IMR-90 (cell line): ENCODE measurements at regions of chr20 and their contacts with region 1.

Region 1: DNA sequence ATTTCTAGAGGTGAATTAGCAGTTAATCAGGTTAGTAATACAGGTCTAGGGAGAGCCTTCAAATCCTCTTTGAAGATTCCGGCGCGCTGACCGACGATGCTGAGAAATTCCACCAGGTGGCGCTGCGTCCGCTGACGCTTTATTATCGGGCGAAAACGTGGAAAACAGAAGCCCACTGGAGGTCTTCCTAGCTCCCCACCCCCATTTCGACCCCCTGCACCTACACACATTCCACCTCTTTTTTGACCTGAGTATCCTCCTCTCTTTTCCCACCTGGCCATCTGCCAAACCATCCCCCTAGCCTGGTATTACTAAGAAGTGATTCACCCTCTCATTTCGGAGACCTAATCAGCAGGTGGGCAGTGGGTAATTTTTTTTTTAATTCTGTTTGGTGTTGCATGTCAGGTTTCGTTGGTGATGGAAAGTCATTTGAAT is 65.4 kb upstream of the RIN2 start:
- DNase-seq: peak; percentile 22
- ATAC-seq: peak; percentile 41; the same call in 1 of the 2 replicates
- H3K4me3 ChIP-seq: no peak overlapping the region
- H3K27ac ChIP-seq: no peak overlapping the region
- H3K4me1 ChIP-seq: peaks cover 4% of the 10 kb centered on the region; the same call in 1 of the 2 replicates
- H3K27me3 ChIP-seq: no peaks in the 10 kb centered on the region
- CTCF ChIP-seq: peak; percentile 81
- POLR2A ChIP-seq: no peak
- RAD21 ChIP-seq: peak; percentile 73

Region 2: DNA sequence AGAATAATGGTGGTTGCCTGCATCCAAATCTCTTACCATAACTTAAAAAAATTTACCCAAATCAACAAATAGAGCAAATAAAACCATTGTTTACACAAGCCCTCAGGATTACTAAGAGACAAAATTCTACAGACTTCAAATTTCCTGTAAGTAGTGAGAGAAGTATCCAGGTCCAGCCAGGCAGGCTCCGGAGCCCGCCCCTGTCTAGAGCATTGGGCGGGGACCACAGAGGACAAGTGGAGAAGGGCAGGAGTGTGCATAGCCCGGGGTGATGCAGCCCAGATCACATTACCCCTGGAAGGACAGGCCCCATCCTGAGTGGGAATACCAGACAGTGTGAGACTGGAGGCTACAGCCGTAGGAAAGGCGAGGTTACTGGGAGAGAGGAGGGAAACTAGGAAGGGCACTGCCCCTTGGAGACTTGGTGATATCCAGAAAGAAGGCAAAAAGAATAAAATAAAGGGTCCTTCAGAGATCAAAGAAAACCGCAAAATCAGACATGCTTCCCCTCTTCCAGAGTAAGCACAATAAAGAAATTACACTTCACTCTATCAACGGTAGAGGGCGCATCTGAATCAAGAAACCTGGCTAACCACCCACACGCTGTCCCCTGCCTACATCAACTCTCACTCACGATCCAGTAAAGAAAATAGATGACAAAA is 91.9 kb after region 1 on chr20:
- CTCF ChIA-PET with region 1: no interaction called
- POLR2A ChIA-PET with region 1: no interaction called
- dilution Hi-C with region 1: no loop called
- in situ Hi-C with region 1: no loop called
- intact Hi-C with region 1: loop called (anchors 1 kb)
- DNase-seq: peak; percentile 91
- ATAC-seq: peak; percentile 74
- H3K4me3 ChIP-seq: no peak overlapping the region
- H3K27ac ChIP-seq: peak overlapping the region; percentile 94
- H3K4me1 ChIP-seq: peaks cover 22% of the 10 kb centered on the region
- H3K27me3 ChIP-seq: no peaks in the 10 kb centered on the region
- CTCF ChIP-seq: peak; percentile 87
- POLR2A ChIP-seq: peak; percentile 39; the same call in 1 of the 2 replicates
- RAD21 ChIP-seq: peak; percentile 97

Region 3: DNA sequence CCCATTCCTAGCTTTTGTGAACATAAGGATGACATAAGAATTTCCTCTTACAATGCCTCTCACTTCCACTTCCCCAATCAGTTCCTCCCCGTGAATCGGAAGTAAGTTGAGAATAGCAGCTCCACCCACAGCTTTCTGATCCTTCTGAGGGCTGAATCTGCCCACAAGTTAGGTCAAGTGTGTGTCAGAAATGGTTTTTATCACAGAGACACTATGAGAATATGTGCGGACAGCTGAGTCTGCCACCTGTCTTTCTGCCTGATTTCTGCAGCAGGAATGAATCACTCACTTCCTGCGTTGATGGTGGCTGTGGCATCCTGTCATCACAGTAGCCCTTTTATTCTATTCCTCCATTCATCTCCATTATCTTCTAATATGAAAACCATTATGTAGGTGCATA is 135.5 kb after region 1 on chr20:
- CTCF ChIA-PET with region 1: no interaction called
- POLR2A ChIA-PET with region 1: no interaction called
- dilution Hi-C with region 1: no loop called
- in situ Hi-C with region 1: no loop called
- intact Hi-C with region 1: no loop called
- DNase-seq: peak; percentile 82
- ATAC-seq: peak; percentile 36; the same call in 1 of the 2 replicates
- H3K4me3 ChIP-seq: no peak overlapping the region
- H3K27ac ChIP-seq: no peak overlapping the region
- H3K4me1 ChIP-seq: peaks cover 16% of the 10 kb centered on the region
- H3K27me3 ChIP-seq: no peaks in the 10 kb centered on the region
- CTCF ChIP-seq: peak; percentile 45
- POLR2A ChIP-seq: no peak
- RAD21 ChIP-seq: peak; percentile 54

Region 4: DNA sequence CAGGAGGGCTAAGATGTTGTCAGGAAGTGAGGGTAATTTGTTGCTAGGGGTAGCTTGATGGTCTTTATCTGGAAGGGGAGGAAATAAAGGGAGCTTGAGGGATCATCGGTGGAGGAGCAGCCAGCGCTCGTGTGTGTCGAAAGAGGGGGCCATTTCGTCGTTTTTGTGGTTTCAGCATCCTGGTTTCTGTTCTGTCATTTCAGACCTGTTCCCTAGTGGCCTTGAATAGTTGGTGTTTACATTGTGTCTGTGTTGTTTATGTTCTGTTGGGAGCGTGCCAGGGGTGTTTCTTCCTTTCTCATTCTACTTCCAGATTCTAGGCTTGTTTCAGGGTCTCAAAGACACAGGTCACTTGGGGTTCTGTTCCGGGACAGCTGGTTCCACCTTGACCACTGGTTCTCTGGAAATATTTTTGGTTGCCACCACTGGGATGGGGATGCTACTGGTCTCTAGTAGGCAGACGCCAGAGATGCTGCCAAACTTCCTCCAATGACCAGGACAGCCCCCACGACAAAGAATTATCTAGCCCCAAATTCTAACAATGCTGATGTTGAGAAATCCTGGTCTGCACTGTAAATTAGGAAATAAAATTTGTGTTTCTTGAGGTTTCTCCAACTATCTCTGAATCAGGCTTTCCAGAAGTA is 210.6 kb after region 1 on chr20:
- CTCF ChIA-PET with region 1: no interaction called
- POLR2A ChIA-PET with region 1: no interaction called
- dilution Hi-C with region 1: no loop called
- in situ Hi-C with region 1: no loop called
- intact Hi-C with region 1: loop called (anchors 5 kb)
- DNase-seq: peak; percentile 76
- ATAC-seq: peak; percentile 68
- H3K4me3 ChIP-seq: no peak overlapping the region
- H3K27ac ChIP-seq: peak overlapping the region; percentile 35; the same call in 1 of the 2 replicates
- H3K4me1 ChIP-seq: peaks cover 3% of the 10 kb centered on the region
- H3K27me3 ChIP-seq: no peaks in the 10 kb centered on the region
- CTCF ChIP-seq: peak; percentile 56
- POLR2A ChIP-seq: no peak
- RAD21 ChIP-seq: peak; percentile 62

Region 5: GRCh38 chr20:20010639-20011500 is 318.2 kb after region 1 on chr20:
- CTCF ChIA-PET with region 1: no interaction called
- POLR2A ChIA-PET with region 1: no interaction called
- dilution Hi-C with region 1: no loop called
- in situ Hi-C with region 1: no loop called
- intact Hi-C with region 1: loop called (anchors 5 kb)
- DNase-seq: peak; percentile 81
- ATAC-seq: peak; percentile 87
- H3K4me3 ChIP-seq: no peak overlapping the region
- H3K27ac ChIP-seq: peak overlapping the region; percentile 70; the same call in 1 of the 2 replicates
- H3K4me1 ChIP-seq: peaks cover 8% of the 10 kb centered on the region
- H3K27me3 ChIP-seq: no peaks in the 10 kb centered on the region
- CTCF ChIP-seq: no peak
- POLR2A ChIP-seq: no peak
- RAD21 ChIP-seq: no peak

Region 6: DNA sequence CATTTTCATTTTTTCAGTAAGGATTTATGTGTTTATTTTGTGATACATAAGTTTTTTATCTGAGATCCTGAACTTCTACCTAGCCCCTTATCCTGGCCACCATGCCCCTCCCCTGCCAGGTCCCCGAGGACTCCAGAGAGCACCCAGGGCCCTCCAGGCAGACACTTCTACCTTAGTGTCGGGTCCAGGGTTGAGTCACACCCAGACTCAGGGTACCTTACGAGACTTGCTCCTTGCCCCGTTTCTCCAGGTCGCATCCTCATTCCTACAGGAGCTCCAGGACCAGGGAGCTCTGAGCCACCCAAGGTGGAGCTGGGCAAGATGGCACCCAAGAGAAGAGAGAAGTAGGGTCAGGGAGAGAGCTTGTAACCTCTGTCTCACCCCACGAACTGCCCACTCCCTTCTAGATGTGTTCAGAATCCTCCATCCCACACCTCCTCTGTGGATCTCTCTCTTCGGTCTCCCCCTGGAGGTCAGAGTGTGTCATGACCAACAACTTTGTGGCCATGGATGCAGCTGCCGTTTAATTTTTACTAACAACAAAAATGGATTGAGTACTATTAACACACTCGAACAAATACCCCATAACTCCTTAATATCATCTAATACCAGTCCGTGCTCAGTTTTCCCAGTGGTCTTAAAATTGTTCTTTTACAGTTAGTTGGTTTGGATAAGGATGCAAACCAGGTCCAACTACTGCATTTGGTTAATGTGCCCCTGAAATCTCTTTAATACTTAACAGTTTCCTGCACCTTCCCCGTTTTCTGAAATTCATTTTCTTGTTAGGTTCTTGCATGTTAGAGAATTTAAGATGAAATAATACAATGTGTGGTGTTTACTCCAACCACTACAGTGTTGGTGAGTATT is 544.6 kb after region 1 on chr20:
- CTCF ChIA-PET with region 1: no interaction called
- POLR2A ChIA-PET with region 1: no interaction called
- dilution Hi-C with region 1: no loop called
- in situ Hi-C with region 1: loop called (anchors 25 kb)
- intact Hi-C with region 1: loop called (anchors 2 kb)
- DNase-seq: peak; percentile 14
- ATAC-seq: peak; percentile 88
- H3K4me3 ChIP-seq: no peak overlapping the region
- H3K27ac ChIP-seq: no peak overlapping the region
- H3K4me1 ChIP-seq: no peaks in the 10 kb centered on the region
- H3K27me3 ChIP-seq: peaks cover 2% of the 10 kb centered on the region
- CTCF ChIP-seq: peak; percentile 65
- POLR2A ChIP-seq: no peak
- RAD21 ChIP-seq: peak; percentile 49